Natural killer cell (primary cell): ENCODE measurements at regions of chr21 and their contacts with region 1.

Region 1: GRCh38 chr21:37463083-37463801 is 96.7 kb downstream of the DYRK1A start:
- DNase-seq: peak in 1 of 2 donors; percentile 66
- ATAC-seq: peak; percentile 60 to 81 (median 60)
- H3K4me3 ChIP-seq: no peak overlapping the region
- H3K4me3 Mint-ChIP-seq: peak overlapping the region; percentile 79
- H3K27ac ChIP-seq: peak overlapping the region; percentile 3
- H3K27ac Mint-ChIP-seq: peak overlapping the region; percentile 87 to 91
- H3K4me1 ChIP-seq: peaks cover 23% of the 10 kb centered on the region
- H3K4me1 Mint-ChIP-seq: peaks cover 76 to 80% of the 10 kb centered on the region in 2 donors
- H3K27me3 ChIP-seq: no peaks in the 10 kb centered on the region
- H3K27me3 Mint-ChIP-seq: no peaks in the 10 kb centered on the region
- CTCF ChIP-seq: peak; percentile 27

Region 2: GRCh38 chr21:36235058-36235582 is 1228.1 kb before region 1 on chr21:
- intact Hi-C with region 1: no loop called
- DNase-seq: no peak
- ATAC-seq: no peak
- H3K4me3 ChIP-seq: no peak overlapping the region
- H3K4me3 Mint-ChIP-seq: no peak overlapping the region
- H3K27ac ChIP-seq: no peak overlapping the region
- H3K27ac Mint-ChIP-seq: no peak overlapping the region
- H3K4me1 ChIP-seq: no peaks in the 10 kb centered on the region
- H3K4me1 Mint-ChIP-seq: peaks cover 6 to 9% of the 10 kb centered on the region in 2 donors
- H3K27me3 ChIP-seq: no peaks in the 10 kb centered on the region
- H3K27me3 Mint-ChIP-seq: no peaks in the 10 kb centered on the region
- CTCF ChIP-seq: no peak

Region 3: GRCh38 chr21:37267269-37268184 is 195.7 kb before region 1 on chr21 and contains the start of gene VPS26C:
- intact Hi-C with region 1: loop called (anchors 5 kb)
- DNase-seq: peak; percentile 94 to 99
- ATAC-seq: peak; percentile 85 to 95 (median 86)
- H3K4me3 ChIP-seq: peak within 1 kb of the TSS; percentile 90
- H3K4me3 Mint-ChIP-seq: peak within 1 kb of the TSS; percentile 97
- H3K27ac ChIP-seq: peak within 1 kb of the TSS; percentile 99
- H3K27ac Mint-ChIP-seq: peak within 1 kb of the TSS; percentile 95 to 99
- H3K4me1 ChIP-seq: peaks cover 22% of the 10 kb centered on the region
- H3K4me1 Mint-ChIP-seq: peaks cover 32 to 52% of the 10 kb centered on the region in 2 donors
- H3K27me3 ChIP-seq: no peaks in the 10 kb centered on the region
- H3K27me3 Mint-ChIP-seq: no peaks in the 10 kb centered on the region
- CTCF ChIP-seq: no peak
- total RNA-seq, gene VPS26C: 71.1 to 84.7 (median 72.2) TPM

Region 4: DNA sequence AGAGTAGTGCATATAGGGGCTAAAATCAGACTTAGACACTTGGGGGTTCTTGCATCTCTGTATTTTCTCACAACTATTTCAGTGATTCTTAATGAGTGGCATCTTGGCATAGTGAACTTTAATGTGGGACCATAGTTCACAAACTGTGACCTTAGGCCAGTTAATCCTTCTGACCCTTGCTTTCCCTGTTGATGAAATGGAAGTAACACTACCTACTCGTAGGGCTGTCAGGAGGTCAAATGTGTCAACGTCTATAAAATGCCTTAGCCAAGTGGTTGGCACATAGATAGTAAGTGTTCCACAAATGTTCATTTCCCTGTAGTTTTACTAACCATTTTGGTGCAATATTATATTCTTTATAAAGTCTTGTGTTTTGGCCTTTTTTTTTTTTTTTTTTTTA is 47.3 kb before region 1 on chr21:
- intact Hi-C with region 1: loop called (anchors 5 kb)
- DNase-seq: no peak
- ATAC-seq: peak; percentile 55 to 63 (median 60)
- H3K4me3 ChIP-seq: no peak overlapping the region
- H3K4me3 Mint-ChIP-seq: peak overlapping the region; percentile 5
- H3K27ac ChIP-seq: peak overlapping the region; percentile 57
- H3K27ac Mint-ChIP-seq: peak overlapping the region; percentile 73 to 81
- H3K4me1 ChIP-seq: peaks cover 19% of the 10 kb centered on the region
- H3K4me1 Mint-ChIP-seq: peaks cover 82 to 85% of the 10 kb centered on the region in 2 donors
- H3K27me3 ChIP-seq: no peaks in the 10 kb centered on the region
- H3K27me3 Mint-ChIP-seq: no peaks in the 10 kb centered on the region
- CTCF ChIP-seq: no peak

Region 5: GRCh38 chr21:37435120-37435519 is 28.1 kb before region 1 on chr21:
- intact Hi-C with region 1: loop called (anchors 2 kb)
- DNase-seq: peak; percentile 48 to 85
- ATAC-seq: peak; percentile 97 to 98 (median 98)
- H3K4me3 ChIP-seq: no peak overlapping the region
- H3K4me3 Mint-ChIP-seq: no peak overlapping the region
- H3K27ac ChIP-seq: peak overlapping the region; percentile 13
- H3K27ac Mint-ChIP-seq: no peak overlapping the region
- H3K4me1 ChIP-seq: peaks cover 12% of the 10 kb centered on the region
- H3K4me1 Mint-ChIP-seq: peaks cover 35 to 53% of the 10 kb centered on the region in 2 donors
- H3K27me3 ChIP-seq: no peaks in the 10 kb centered on the region
- H3K27me3 Mint-ChIP-seq: no peaks in the 10 kb centered on the region
- CTCF ChIP-seq: no peak

Region 6: DNA sequence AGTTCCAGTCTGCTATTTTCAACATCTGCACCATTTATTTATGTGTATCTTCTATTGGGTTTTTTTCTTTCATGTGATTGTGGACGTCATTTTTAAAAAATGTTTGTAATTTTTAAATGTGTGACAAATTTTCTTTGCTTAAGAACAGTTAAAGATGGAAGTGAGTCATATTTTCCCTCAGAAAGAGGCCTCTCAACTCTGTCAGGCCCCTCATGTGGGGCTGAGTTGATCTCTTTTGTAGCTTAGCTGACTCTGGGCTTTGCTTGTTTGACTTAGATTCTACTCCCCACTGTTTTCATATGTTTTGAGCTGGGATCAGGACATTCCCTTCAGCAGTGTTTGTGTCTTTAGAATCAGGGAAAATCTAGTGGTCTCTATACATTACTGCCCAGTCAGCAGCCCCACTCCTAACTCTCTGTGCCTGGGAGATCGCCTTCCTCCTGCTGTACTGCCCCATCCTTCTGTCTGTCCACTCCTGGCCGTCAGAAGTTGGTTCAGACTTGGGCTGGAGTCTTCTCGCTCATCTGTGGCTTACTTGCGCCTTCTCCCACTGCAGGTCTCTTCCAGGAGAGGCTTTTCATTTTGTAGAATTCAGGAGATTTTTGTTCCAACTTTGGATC is 40.7 kb after region 1 on chr21:
- intact Hi-C with region 1: no loop called
- DNase-seq: no peak
- ATAC-seq: peak in 1 of 3 donors; percentile 31
- H3K4me3 ChIP-seq: no peak overlapping the region
- H3K4me3 Mint-ChIP-seq: no peak overlapping the region
- H3K27ac ChIP-seq: no peak overlapping the region
- H3K27ac Mint-ChIP-seq: peak overlapping the region; percentile 14 to 63
- H3K4me1 ChIP-seq: no peaks in the 10 kb centered on the region
- H3K4me1 Mint-ChIP-seq: peaks cover 21 to 24% of the 10 kb centered on the region in 2 donors
- H3K27me3 ChIP-seq: no peaks in the 10 kb centered on the region
- H3K27me3 Mint-ChIP-seq: no peaks in the 10 kb centered on the region
- CTCF ChIP-seq: no peak

Region 7: DNA sequence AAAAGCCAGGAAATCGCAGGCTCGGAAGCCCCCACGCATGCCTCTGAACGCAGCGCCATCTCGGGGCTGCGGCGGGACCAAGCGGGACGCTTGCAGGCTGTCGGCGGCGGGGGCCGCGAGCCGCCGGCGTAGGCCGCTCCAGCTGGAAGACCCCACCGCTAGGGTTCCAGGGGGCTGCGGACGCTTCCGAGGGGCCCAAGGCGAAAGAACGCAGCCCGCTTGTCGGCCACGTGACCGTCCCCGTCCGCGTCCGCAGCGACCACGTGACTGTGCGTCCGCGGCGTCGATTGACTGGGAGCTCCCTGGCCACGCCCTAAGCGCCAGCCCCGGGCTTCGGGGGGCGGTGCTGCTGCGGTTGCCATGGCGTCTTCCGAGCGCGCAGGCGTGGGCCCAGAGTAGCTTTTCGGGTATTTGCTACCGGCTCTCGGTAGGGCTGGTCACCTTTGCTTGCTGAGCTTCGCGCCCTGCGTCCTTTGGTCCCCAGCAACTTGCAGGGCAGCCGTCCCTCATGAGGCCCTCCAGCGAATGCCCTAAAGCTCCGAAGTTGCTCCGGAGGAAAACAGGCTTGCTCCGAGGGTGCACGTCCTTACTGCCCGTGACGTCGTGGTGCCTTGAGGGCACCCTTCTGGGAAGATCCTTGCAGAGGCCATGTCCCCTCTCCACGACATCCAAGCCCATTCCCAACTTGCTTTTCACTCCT is 100.5 kb after region 1 on chr21:
- intact Hi-C with region 1: loop called (anchors 5 kb)
- DNase-seq: peak; percentile 92 to 97
- ATAC-seq: peak; percentile 73 to 94 (median 87)
- H3K4me3 ChIP-seq: peak overlapping the region; percentile 87
- H3K4me3 Mint-ChIP-seq: peak overlapping the region; percentile 97
- H3K27ac ChIP-seq: peak overlapping the region; percentile 95
- H3K27ac Mint-ChIP-seq: peak overlapping the region; percentile 98 to 100
- H3K4me1 ChIP-seq: peaks cover 15% of the 10 kb centered on the region
- H3K4me1 Mint-ChIP-seq: peaks cover 18 to 28% of the 10 kb centered on the region in 2 donors
- H3K27me3 ChIP-seq: no peaks in the 10 kb centered on the region
- H3K27me3 Mint-ChIP-seq: peaks cover 0 to 3% of the 10 kb centered on the region in 2 donors
- CTCF ChIP-seq: peak; percentile 37